Endothelial cell of umbilical vein (primary cell): ENCODE measurements at regions of chr12 and their contacts with region 1.

Region 1: GRCh38 chr12:64801381-64801780 is 23.1 kb upstream of the TBC1D30 start:
- DNase-seq: peak; percentile 33
- H3K4me3 ChIP-seq: no peak overlapping the region
- H3K27ac ChIP-seq: no peak overlapping the region
- H3K4me1 ChIP-seq: no peaks in the 10 kb centered on the region
- H3K27me3 ChIP-seq: no peaks in the 10 kb centered on the region
- CTCF ChIP-seq: peak; percentile 17 to 33
- POLR2A ChIP-seq: no peak

Region 2: DNA sequence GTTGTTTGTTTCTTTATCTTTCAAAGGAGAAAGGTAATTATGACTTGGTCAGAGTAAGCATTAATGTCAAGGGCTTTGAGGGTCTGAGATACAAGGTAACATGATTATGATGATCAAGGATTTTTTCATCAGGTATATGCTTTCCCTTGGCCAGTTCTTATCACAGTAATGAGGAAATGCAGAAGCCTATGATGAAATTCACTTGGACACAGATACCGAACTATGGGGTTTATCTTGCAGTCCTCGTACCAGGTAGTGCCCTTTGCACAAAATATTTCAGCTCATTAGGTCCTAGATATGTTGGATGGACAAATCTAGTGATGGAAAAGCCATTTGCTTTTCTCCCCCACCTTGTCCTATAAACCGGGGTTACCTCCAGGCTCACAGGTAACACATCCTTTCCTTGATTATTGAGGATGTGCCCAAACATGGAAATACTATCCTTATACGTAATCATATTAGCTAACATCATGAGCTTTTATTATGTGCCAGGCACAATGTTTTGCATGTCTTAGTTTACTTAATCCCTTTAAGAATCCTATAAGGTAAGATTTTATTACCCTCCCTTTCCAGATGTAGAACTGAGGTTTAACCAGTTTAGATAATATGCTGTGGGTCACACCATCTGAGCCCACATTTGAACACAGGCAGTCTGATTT is 198.1 kb before region 1 on chr12:
- CTCF ChIA-PET with region 1: no interaction called
- POLR2A ChIA-PET with region 1: no interaction called
- dilution Hi-C with region 1: no loop called
- intact Hi-C with region 1: no loop called
- DNase-seq: no peak
- H3K4me3 ChIP-seq: no peak overlapping the region
- H3K27ac ChIP-seq: no peak overlapping the region
- H3K4me1 ChIP-seq: peaks cover under 1% of the 10 kb centered on the region
- H3K27me3 ChIP-seq: no peaks in the 10 kb centered on the region
- CTCF ChIP-seq: no peak
- POLR2A ChIP-seq: no peak

Region 3: GRCh38 chr12:64672925-64673409 is 128.4 kb before region 1 on chr12:
- CTCF ChIA-PET with region 1: no interaction called
- POLR2A ChIA-PET with region 1: no interaction called
- dilution Hi-C with region 1: no loop called
- intact Hi-C with region 1: no loop called
- DNase-seq: peak; percentile 87
- H3K4me3 ChIP-seq: no peak overlapping the region
- H3K27ac ChIP-seq: peak overlapping the region; percentile 61
- H3K4me1 ChIP-seq: peaks cover 80% of the 10 kb centered on the region
- H3K27me3 ChIP-seq: no peaks in the 10 kb centered on the region
- CTCF ChIP-seq: no peak
- POLR2A ChIP-seq: no peak

Region 4: DNA sequence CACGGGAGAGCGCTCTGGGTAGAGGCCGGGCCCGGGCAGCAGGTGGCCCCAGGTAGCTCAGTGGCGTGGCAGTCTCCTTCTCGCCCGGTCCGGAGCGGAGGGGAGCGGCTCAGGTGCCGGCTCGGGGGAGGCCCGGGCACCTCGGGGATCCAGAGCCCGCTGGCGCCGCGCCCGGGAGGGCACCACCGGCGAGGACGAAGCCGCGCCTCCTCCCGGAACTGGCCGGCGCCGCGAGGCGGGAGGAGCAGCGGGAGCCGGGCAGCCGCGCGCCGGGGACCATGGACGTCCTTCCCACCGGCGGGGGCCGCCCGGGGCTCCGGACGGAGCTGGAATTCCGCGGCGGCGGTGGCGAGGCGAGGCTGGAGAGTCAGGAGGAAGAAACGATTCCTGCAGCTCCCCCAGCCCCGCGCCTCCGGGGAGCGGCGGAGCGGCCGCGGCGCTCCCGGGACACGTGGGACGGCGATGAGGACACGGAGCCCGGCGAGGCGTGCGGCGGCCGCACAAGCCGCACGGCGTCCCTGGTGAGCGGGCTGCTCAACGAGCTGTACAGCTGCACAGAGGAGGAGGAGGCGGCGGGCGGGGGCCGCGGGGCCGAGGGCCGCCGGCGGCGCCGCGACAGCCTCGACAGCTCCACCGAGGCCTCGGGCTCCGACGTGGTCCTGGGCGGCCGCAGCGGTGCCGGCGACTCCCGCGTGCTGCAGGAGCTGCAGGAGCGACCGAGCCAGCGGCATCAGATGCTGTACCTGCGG is 20.7 kb before region 1 on chr12:
- CTCF ChIA-PET with region 1: interaction called, 47 read pairs
- POLR2A ChIA-PET with region 1: no interaction called
- dilution Hi-C with region 1: no loop called
- intact Hi-C with region 1: no loop called
- DNase-seq: peak; percentile 43
- H3K4me3 ChIP-seq: peak overlapping the region; percentile 23 to 64 (median 49)
- H3K27ac ChIP-seq: no peak overlapping the region
- H3K4me1 ChIP-seq: peaks cover 16% of the 10 kb centered on the region
- H3K27me3 ChIP-seq: peaks cover 4 to 19% of the 10 kb centered on the region in 2 experiments
- CTCF ChIP-seq: no peak
- POLR2A ChIP-seq: no peak

Region 5: DNA sequence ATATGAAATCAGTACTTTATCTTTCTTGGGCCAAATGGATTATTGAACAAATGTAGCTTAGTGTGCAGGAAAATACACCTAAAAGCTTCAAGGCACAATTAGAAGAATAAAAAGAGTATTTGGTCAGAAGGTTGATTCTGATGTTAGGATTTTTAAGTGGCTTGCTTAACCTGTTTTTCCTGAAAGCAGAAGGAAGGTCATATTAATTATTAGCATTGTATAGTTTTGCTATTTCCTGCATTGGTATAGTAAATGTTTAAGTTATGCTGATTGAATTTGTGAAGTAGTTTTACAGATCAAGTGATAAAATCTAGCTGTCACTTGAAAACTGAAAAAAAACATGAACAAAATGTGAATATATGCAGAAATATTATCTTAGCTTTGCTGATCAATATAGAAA is 11.2 kb before region 1 on chr12:
- CTCF ChIA-PET with region 1: interaction called, 20 read pairs
- POLR2A ChIA-PET with region 1: no interaction called
- dilution Hi-C with region 1: no loop called
- intact Hi-C with region 1: no loop called
- DNase-seq: no peak
- H3K4me3 ChIP-seq: no peak overlapping the region
- H3K27ac ChIP-seq: no peak overlapping the region
- H3K4me1 ChIP-seq: no peaks in the 10 kb centered on the region
- H3K27me3 ChIP-seq: no peaks in the 10 kb centered on the region
- CTCF ChIP-seq: no peak
- POLR2A ChIP-seq: no peak

Region 6: GRCh38 chr12:65106948-65107347 is 305.6 kb after region 1 on chr12:
- CTCF ChIA-PET with region 1: interaction called, 20 read pairs
- POLR2A ChIA-PET with region 1: no interaction called
- dilution Hi-C with region 1: no loop called
- intact Hi-C with region 1: loop called (anchors 2 kb)
- DNase-seq: peak; percentile 9
- H3K4me3 ChIP-seq: no peak overlapping the region
- H3K27ac ChIP-seq: no peak overlapping the region
- H3K4me1 ChIP-seq: no peaks in the 10 kb centered on the region
- H3K27me3 ChIP-seq: peaks cover 1 to 4% of the 10 kb centered on the region in 2 experiments
- CTCF ChIP-seq: peak in 1 of 2 donors; percentile 24
- POLR2A ChIP-seq: no peak

Region 7: DNA sequence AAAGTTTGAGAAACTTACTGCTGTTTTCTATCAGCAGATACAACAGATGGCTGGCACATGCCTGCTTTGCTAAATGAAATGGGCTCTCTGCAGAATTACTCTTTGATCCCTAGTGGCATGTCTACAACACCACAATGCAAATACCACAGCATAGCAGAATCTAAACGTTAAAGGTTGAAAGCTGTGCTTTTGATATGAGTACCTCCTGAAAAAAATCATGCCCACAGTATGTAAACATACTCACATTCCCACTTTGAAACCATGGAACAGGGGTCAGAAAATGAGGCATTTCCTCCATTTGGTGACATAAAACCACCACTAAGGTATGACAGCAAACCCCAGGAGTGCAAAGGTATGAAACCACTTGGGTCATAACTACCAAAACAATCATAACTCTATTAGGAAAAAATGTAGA is 312.2 kb after region 1 on chr12:
- CTCF ChIA-PET with region 1: interaction called, 20 read pairs
- POLR2A ChIA-PET with region 1: no interaction called
- dilution Hi-C with region 1: no loop called
- intact Hi-C with region 1: no loop called
- DNase-seq: no peak
- H3K4me3 ChIP-seq: no peak overlapping the region
- H3K27ac ChIP-seq: no peak overlapping the region
- H3K4me1 ChIP-seq: no peaks in the 10 kb centered on the region
- H3K27me3 ChIP-seq: peaks cover 16 to 20% of the 10 kb centered on the region in 2 experiments
- CTCF ChIP-seq: no peak
- POLR2A ChIP-seq: no peak

Region 8: DNA sequence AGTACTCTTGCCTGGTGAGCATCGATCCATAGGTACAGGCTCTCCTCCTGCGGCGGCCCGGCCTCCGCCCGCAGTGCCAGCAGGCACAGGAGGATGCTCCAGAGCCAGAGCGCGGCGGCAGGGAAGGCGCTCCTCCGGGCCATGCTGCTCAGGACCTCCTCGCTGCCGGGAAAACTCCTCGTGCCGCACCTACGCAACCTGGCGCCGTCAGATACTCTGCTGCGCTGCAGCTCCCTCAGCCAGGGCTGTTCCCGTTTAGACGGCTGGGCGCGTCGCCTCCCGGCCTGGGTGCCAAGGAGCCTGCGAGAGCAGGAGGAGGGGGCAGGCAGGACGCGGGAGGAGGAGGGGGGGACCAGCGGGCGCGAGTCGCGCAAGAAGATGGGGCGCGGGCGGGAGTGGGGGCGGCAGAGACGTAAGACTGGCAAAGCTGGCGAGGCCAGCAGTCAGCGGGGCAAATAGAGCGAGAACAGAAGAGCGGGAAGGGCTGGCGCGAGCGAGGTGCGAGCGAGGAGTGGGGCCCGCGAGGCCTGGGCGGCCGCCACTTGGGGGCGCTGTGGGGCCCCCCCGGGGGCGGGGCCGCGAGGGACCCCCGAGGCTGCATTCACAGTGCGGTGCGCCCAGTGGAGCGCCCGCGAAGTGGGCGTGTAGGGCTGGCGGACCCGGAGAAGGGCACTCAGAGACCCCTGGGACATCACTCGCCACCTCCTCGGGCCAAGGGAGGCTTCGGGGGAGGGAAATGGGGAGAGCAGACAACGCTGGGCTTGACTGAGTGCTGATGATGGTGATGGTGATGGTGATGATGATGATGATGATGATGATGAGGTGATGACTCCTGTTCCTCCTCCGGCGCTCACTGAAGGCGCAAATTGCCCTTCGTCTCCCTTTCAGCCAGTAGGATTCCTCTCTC is 319.9 kb after region 1 on chr12 and contains the start of gene WIF1:
- CTCF ChIA-PET with region 1: interaction called, 22 read pairs
- POLR2A ChIA-PET with region 1: no interaction called
- dilution Hi-C with region 1: no loop called
- intact Hi-C with region 1: loop called (anchors 1 kb)
- DNase-seq: peak; percentile 22
- H3K4me3 ChIP-seq: peak within 1 kb of the TSS; percentile 12 to 21 (median 13)
- H3K27ac ChIP-seq: no peak within 1 kb of the TSS
- H3K4me1 ChIP-seq: peaks cover 2% of the 10 kb centered on the region
- H3K27me3 ChIP-seq: peaks cover 36 to 67% of the 10 kb centered on the region in 2 experiments
- CTCF ChIP-seq: peak; percentile 59 to 69
- POLR2A ChIP-seq: no peak
- total RNA-seq, gene WIF1: not detected in 2 replicates